Heart right ventricle (tissue), 16 donors: ENCODE measurements at regions of chr4 and their contacts with region 1.

Region 1: GRCh38 chr4:11623726-11624037 is 195.0 kb upstream of the HS3ST1 start:
- DNase-seq: peak in 1 of 2 donors; percentile 34
- ATAC-seq: peak in 2 of 8 donors; percentile 40 to 48
- H3K4me3 ChIP-seq: no peak overlapping the region
- H3K27ac ChIP-seq: peak overlapping the region in 3 of 10 donors; percentile 70 to 80 (median 74)
- H3K4me1 ChIP-seq: peaks cover 0 to 38% (median 6%) of the 10 kb centered on the region in 9 donors
- H3K27me3 ChIP-seq: no peaks in the 10 kb centered on the region
- CTCF ChIP-seq: peak in 7 of 9 donors; percentile 46 to 70 (median 53)

Region 2: GRCh38 chr4:11436673-11437072 is 187.0 kb before region 1 on chr4:
- intact Hi-C with region 1: loop called in 1 of 10 experiments (anchors 10 kb)
- DNase-seq: no peak
- ATAC-seq: no peak
- H3K4me3 ChIP-seq: no peak overlapping the region
- H3K27ac ChIP-seq: no peak overlapping the region
- H3K4me1 ChIP-seq: peaks cover 0 to 19% (median 0%) of the 10 kb centered on the region in 9 donors
- H3K27me3 ChIP-seq: no peaks in the 10 kb centered on the region
- CTCF ChIP-seq: no peak

Region 3: DNA sequence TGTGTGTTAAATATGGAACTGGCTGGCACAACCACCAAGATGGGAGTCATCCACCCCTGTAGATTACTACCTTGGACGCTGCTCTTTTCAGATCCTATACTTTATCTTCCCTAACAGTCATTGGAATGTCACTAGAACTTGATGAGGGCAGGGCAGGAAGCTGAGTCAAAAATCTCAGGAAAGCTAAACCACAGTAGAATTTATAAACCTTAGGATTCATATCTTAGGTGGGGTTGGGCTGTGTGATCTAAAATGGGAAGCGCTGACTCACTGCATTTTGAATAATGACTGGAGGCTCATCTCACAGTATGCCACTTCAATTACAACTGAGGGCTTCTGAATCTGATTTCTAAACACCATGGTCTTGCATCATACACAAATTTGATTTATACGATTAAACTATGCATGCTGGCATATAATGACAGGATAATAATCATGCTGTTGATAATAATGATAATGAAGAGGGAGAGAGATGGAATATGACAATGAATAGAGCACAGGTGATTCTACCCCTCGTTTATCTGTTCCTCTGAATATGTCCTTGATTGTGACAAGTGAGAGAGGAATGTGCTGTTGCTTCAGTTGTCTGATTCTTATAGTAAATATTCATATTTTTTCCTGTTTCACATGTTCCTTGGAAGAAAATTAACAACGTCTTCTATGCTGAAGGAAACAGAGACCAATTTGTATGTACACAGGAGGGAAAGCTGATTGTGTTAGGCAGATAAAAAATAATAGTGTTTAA is 75.3 kb after region 1 on chr4:
- intact Hi-C with region 1: loop called in 1 of 10 experiments (anchors 5 kb)
- DNase-seq: no peak
- ATAC-seq: peak in 6 of 8 donors; percentile 52 to 84 (median 64)
- H3K4me3 ChIP-seq: no peak overlapping the region
- H3K27ac ChIP-seq: peak overlapping the region in 1 of 10 donors; percentile 14
- H3K4me1 ChIP-seq: peaks cover 0 to 22% (median 6%) of the 10 kb centered on the region in 9 donors
- H3K27me3 ChIP-seq: no peaks in the 10 kb centered on the region
- CTCF ChIP-seq: no peak

Region 4: DNA sequence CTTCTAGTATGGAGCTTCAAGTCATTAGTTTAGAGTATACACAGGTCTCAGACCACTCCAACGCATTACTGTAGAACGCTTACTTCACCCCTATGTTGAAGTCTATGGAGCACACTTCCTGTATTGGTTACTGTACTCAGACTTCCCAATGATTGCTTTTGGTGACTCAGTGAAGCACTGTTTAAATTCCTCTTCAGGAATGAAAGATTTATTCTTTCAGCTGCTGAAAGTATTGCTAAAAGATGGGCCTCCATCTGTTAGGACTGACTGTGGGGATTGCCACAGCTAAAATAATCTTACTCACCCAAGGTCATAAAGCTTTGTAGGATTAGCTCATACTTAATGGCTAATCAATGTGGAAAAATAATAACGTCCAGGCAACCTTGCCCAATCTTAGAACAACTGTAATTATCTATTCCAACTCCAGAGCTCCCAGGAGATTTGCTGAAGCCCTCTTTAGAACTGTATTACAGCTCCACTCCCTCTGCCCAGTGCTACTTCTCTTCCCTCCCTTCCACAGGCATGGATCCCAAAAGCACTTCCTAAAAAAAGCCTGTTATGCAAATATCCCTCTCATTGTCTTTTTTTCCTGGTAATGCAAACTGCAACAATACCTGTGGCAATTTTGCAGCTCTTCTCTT is 86.9 kb after region 1 on chr4:
- intact Hi-C with region 1: loop called in 1 of 10 experiments (anchors 10 kb)
- DNase-seq: no peak
- ATAC-seq: no peak
- H3K4me3 ChIP-seq: no peak overlapping the region
- H3K27ac ChIP-seq: no peak overlapping the region
- H3K4me1 ChIP-seq: no peaks in the 10 kb centered on the region
- H3K27me3 ChIP-seq: no peaks in the 10 kb centered on the region
- CTCF ChIP-seq: no peak